ENCODE measurements at regions of chr1 and their contacts with region 1.

Region 1: GRCh38 chr1:176897350-176898236 is 266.9 kb downstream of the ASTN1 start:
- DNase-seq: peak; percentile 38 to 55
- ATAC-seq: peak; percentile 34 to 83 (median 74)
- H3K4me3 ChIP-seq: peak overlapping the region in 6 of 10 donors; percentile 23 to 41 (median 32)
- H3K27ac ChIP-seq: no peak overlapping the region
- H3K4me1 ChIP-seq: peaks cover 0 to 9% (median 5%) of the 10 kb centered on the region in 9 donors
- H3K27me3 ChIP-seq: peaks cover 0 to 35% (median 12%) of the 10 kb centered on the region in 7 donors
- CTCF ChIP-seq: peak; percentile 53 to 77 (median 68)

Region 2: DNA sequence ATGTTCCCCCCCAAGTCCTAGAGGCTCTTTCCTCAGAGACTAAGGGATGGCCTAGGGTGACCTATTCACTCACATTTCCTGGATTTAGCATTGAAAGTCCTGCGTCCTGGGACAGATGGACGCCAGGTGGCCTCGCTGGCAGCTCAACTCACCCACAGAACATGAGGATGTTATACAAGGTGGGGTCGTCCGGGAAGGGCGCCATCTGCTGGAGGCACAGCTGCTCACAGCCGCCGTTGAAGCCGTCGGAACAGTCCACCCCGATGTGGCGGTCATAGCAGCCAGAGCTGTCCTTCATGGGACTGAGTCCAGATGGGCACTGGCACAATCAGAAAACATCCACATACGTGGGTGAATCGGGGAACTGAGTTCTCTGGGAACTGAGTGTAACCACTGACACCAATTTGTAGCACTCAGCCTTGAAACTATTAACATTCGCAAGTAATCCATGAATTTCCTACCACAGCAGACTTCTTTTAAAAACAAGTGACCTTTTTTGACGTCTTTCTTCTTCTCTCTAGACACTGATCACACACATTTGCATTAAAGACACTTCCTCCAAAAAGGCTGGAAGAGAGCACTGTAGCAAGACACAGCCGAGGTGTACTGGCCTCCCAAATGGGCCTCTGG is 51.6 kb after region 1 on chr1:
- intact Hi-C with region 1: loop called in 4 of 10 experiments (anchors 2 to 5 kb)
- DNase-seq: peak; percentile 26 to 47
- ATAC-seq: peak; percentile 28 to 87 (median 60)
- H3K4me3 ChIP-seq: no peak overlapping the region
- H3K27ac ChIP-seq: no peak overlapping the region
- H3K4me1 ChIP-seq: no peaks in the 10 kb centered on the region
- H3K27me3 ChIP-seq: no peaks in the 10 kb centered on the region
- CTCF ChIP-seq: peak in 8 of 9 donors; percentile 14 to 62 (median 56)

Region 3: GRCh38 chr1:177181631-177182291 is 284.2 kb after region 1 on chr1:
- intact Hi-C with region 1: loop called (anchors 1 to 5 kb)
- DNase-seq: peak; percentile 52
- ATAC-seq: peak; percentile 71 to 92 (median 86)
- H3K4me3 ChIP-seq: peak overlapping the region in 8 of 10 donors; percentile 1 to 39 (median 20)
- H3K27ac ChIP-seq: no peak overlapping the region
- H3K4me1 ChIP-seq: peaks cover 0 to 8% (median 0%) of the 10 kb centered on the region in 9 donors
- H3K27me3 ChIP-seq: peaks cover 0 to 45% (median 29%) of the 10 kb centered on the region in 7 donors
- CTCF ChIP-seq: peak; percentile 74 to 86 (median 82)

Region 4: GRCh38 chr1:177355595-177355994 is 458.0 kb after region 1 on chr1:
- intact Hi-C with region 1: loop called in 5 of 10 experiments (anchors 5 to 10 kb)
- DNase-seq: no peak
- ATAC-seq: peak in 1 of 8 donors; percentile 41
- H3K4me3 ChIP-seq: no peak overlapping the region
- H3K27ac ChIP-seq: no peak overlapping the region
- H3K4me1 ChIP-seq: no peaks in the 10 kb centered on the region
- H3K27me3 ChIP-seq: peaks cover 0 to 49% (median 17%) of the 10 kb centered on the region in 7 donors
- CTCF ChIP-seq: peak in 7 of 9 donors; percentile 30 to 51 (median 39)

Region 5: DNA sequence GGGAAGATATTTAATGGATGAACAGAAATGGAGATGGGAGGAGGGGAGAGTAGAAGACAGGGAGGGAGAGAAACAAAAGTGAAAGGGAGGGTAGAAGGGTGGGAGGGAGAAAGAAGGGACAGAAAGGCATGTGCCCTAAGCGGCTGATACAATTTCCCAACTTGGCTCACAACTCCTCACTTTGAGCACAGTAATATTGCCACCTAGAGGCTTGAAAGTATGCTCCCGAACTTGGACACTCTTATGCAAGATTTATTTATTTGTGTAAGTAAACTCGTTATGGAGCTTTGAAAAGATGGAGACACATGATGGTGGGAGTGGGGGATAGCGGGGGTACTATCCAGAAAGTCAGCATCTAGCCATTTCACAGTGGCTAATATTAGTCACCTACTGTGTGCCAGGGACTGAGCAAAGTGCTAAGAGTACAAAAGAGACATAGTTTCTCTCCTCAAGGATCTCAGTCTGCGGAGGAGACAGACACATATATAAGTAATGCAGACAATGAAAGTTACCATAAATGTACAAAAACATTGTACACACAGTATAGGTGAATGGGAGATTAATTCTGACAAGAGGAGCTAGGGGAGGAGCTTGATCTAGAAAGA is 882.6 kb after region 1 on chr1:
- intact Hi-C with region 1: loop called in 6 of 10 experiments (anchors 2 to 10 kb)
- DNase-seq: no peak
- ATAC-seq: peak in 5 of 8 donors; percentile 44 to 67 (median 65)
- H3K4me3 ChIP-seq: no peak overlapping the region
- H3K27ac ChIP-seq: no peak overlapping the region
- H3K4me1 ChIP-seq: no peaks in the 10 kb centered on the region
- H3K27me3 ChIP-seq: peaks cover 0 to 52% (median 15%) of the 10 kb centered on the region in 7 donors
- CTCF ChIP-seq: peak in 8 of 9 donors; percentile 39 to 64 (median 49)

Region 6: DNA sequence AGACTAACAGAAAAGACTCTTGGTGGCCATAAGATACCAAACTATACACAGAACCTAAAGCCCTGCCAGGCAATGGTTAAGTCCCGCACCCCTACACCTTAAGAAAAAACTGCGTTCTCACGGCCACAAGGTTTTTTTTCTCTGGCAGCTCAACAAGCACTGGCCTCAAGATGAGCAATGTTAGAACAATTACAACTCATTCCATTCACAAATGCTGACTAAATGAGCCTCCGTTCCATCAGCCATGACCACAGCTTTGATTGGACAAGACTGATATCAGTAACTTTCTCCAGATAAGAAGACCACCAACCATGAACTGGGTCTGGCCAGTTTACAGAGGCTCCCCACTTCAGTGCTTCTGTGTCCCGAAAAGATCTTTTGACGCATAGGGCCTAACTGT is 1040.3 kb after region 1 on chr1:
- intact Hi-C with region 1: loop called in 5 of 10 experiments (anchors 5 to 10 kb)
- DNase-seq: no peak
- ATAC-seq: no peak
- H3K4me3 ChIP-seq: no peak overlapping the region
- H3K27ac ChIP-seq: no peak overlapping the region
- H3K4me1 ChIP-seq: peaks cover 0 to 10% (median 0%) of the 10 kb centered on the region in 9 donors
- H3K27me3 ChIP-seq: no peaks in the 10 kb centered on the region
- CTCF ChIP-seq: no peak

Region 7: GRCh38 chr1:177948336-177948972 is 1050.9 kb after region 1 on chr1:
- intact Hi-C with region 1: loop called in 7 of 10 experiments (anchors 2 to 10 kb)
- DNase-seq: peak in 1 of 2 donors; percentile 46
- ATAC-seq: peak in 7 of 8 donors; percentile 45 to 77 (median 56)
- H3K4me3 ChIP-seq: no peak overlapping the region
- H3K27ac ChIP-seq: no peak overlapping the region
- H3K4me1 ChIP-seq: peaks cover 0 to 10% (median 0%) of the 10 kb centered on the region in 9 donors
- H3K27me3 ChIP-seq: no peaks in the 10 kb centered on the region
- CTCF ChIP-seq: peak; percentile 77 to 91 (median 89)

Measured in heart right ventricle (tissue), 16 donors.